OCI-LY7 (cell line): ENCODE measurements at regions of chr16 and their contacts with region 1.

Region 1: DNA sequence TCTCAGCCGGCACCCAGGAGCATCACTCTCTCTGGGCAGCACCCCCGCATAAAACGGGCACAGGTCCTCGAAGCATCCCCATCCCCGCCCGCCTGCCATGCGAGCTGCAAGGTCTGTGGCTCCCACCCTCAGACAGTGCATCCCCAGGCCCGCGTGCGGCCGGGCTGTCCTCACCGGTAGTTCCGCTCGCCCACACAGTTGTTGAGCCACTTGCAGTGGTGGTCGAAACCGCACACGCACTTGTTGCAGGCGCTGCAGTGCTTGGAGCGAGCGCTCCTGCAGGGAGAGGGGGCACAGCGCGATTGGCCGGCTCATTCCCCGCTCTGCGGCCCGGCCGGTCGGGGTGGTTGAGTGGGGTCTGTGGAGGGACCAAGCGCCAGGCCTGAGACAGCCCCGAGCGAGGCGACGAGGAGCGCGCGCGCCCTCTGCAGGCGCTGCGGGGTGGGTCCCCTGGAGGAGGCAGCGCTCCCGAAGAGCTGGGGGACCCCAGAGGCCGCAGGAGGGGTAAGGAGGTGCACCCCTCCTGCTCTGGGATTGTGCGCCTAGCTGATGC is 6.0 kb upstream of the TPPP3 start:
- DNase-seq: peak; percentile 52
- H3K4me3 ChIP-seq: no peak overlapping the region
- H3K27ac ChIP-seq: no peak overlapping the region
- H3K4me1 ChIP-seq: no peaks in the 10 kb centered on the region
- CTCF ChIP-seq: peak; percentile 78

Region 2: GRCh38 chr16:67260426-67261075 is 138.7 kb before region 1 on chr16:
- CTCF ChIA-PET with region 1: no interaction called
- POLR2A ChIA-PET with region 1: interaction called, 4 read pairs
- intact Hi-C with region 1: loop called (anchors 1 kb)
- DNase-seq: peak; percentile 77
- H3K4me3 ChIP-seq: no peak overlapping the region
- H3K27ac ChIP-seq: no peak overlapping the region
- H3K4me1 ChIP-seq: peaks cover 5% of the 10 kb centered on the region
- CTCF ChIP-seq: peak; percentile 84

Region 3: GRCh38 chr16:67279296-67280089 is 119.8 kb before region 1 on chr16 and contains the start of gene PLEKHG4:
- CTCF ChIA-PET with region 1: no interaction called
- POLR2A ChIA-PET with region 1: no interaction called
- intact Hi-C with region 1: loop called (anchors 5 kb)
- DNase-seq: peak; percentile 46
- H3K4me3 ChIP-seq: peak within 1 kb of the TSS; percentile 53
- H3K27ac ChIP-seq: no peak within 1 kb of the TSS
- H3K4me1 ChIP-seq: no peaks in the 10 kb centered on the region
- CTCF ChIP-seq: peak; percentile 65
- total RNA-seq, gene PLEKHG4: not detected in 2 replicates

Region 4: DNA sequence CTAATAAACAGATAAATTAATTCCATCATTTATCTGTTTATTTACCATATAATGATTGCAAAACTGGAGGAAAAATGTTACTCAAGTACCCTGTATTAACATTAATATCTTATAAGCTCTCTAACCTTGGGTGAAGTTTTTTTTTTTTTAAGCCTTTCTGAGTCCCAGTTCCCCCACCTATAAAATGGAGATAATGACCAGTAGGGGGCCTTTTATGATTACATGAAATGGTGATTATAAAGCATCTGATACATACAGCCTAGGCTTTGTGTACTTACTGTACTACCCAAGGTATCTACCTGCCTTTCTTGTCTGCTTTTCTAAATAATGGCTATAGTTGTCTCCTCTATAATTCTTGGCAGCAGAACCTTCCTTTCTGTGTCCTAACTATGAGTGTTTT is 50.1 kb before region 1 on chr16:
- CTCF ChIA-PET with region 1: no interaction called
- POLR2A ChIA-PET with region 1: no interaction called
- intact Hi-C with region 1: loop called (anchors 5 kb)
- DNase-seq: peak; percentile 67
- H3K4me3 ChIP-seq: no peak overlapping the region
- H3K27ac ChIP-seq: no peak overlapping the region
- H3K4me1 ChIP-seq: no peaks in the 10 kb centered on the region
- CTCF ChIP-seq: peak; percentile 88

Region 5: GRCh38 chr16:67415872-67416793 is 16.9 kb after region 1 on chr16 and contains the start of gene ZDHHC1:
- CTCF ChIA-PET with region 1: no interaction called
- POLR2A ChIA-PET with region 1: no interaction called
- intact Hi-C with region 1: no loop called
- DNase-seq: peak; percentile 14
- H3K4me3 ChIP-seq: peak within 1 kb of the TSS; percentile 21
- H3K27ac ChIP-seq: no peak within 1 kb of the TSS
- H3K4me1 ChIP-seq: no peaks in the 10 kb centered on the region
- CTCF ChIP-seq: peak; percentile 71
- total RNA-seq, gene ZDHHC1: not detected in 2 replicates

Region 6: DNA sequence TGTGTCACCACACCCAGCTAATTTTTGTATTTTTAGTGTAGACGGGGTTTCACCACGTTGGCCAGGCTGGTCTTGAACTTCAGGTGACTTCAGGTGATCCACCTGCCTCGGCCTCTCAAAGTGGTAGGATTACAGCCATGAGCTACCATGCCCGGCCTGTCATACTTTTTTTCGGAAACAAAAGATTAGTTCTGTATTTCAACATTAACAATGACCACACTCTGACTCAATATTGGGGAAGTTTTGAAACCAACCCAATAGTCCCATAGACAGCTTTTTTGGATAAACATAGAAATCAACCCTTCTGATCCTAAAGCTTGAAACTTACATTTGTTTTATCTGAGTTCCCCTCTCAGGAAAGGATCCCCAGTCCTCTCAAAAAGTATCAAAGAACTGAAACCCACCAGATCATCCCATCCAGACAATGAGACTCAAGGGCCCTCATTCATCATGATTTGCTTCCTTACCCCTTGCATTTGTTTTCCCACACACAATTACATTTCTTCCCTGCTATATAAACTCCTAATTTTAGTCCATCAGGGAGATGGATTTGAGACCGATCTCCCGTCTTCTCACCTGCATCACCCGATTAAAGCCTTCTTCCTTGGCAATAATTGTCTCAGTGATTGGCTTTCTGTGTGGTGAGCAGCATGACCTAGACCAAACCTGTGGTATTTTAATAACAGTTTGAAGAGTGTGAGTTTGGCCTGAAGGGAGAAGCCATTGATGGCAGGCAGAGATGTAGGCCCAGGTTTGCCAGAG is 91.3 kb after region 1 on chr16:
- CTCF ChIA-PET with region 1: no interaction called
- POLR2A ChIA-PET with region 1: no interaction called
- intact Hi-C with region 1: no loop called
- DNase-seq: no peak
- H3K4me3 ChIP-seq: no peak overlapping the region
- H3K27ac ChIP-seq: no peak overlapping the region
- H3K4me1 ChIP-seq: peaks cover 68% of the 10 kb centered on the region
- CTCF ChIP-seq: no peak